HepG2 (cell line): ENCODE measurements at regions of chr19 and their contacts with region 1.

Region 1: DNA sequence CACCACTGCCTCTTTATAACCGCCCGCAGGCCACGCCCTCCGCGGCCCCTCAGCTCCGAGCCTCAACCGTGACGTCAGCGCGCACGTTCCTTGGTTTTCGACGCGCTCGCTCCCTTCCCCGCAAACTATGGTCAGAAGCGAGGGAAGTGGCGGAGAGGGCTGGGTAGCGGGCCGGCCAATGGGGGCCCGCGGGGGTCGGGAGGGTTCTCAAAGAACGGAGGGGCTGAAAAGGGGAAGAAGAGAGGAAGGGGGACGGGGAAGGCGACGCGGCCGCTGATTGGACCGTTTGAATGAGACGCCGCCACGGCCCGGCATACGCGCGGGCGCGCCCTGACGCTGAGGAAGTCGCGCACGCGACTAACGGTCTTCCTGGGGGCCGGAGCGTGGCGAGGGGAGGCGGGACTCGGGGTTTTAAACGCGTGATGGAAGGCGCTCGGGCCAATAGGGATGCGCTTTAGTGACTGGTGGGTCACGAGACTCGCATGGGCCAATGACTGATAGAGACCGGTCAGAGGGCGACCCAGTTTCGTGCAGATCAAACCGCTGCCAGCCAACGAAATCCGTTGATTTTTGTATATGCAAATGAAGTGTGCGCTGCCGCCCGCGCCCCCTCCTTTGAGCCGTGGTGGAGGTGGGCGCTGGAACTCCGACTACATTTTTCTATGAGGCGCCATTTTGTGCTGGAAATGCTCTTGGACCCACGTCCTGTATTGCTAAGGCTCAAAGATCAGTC is 378 bp upstream of the UBE2S start:
- DNase-seq: peak; percentile 83
- ATAC-seq: peak; percentile 86
- H3K4me3 ChIP-seq: peak overlapping the region; percentile 82 to 88 (median 83); a peak in 5 of 6 replicates
- H3K27ac ChIP-seq: peak overlapping the region; percentile 68
- H3K4me1 ChIP-seq: peaks cover 26% of the 10 kb centered on the region
- H3K27me3 ChIP-seq: peaks cover 0 to 5% of the 10 kb centered on the region in 2 experiments; a peak in 1 of 5 replicates
- CTCF ChIP-seq: no peak
- EP300 ChIP-seq: no peak
- POLR2A ChIP-seq: no peak
- RAD21 ChIP-seq: 0 out of 2 replicates have a peak, but pooled peaks have one; percentile 1

Region 2: GRCh38 chr19:54281007-54281728 is 1126.8 kb before region 1 on chr19 and contains the start of gene LILRB2:
- CTCF ChIA-PET with region 1: no interaction called
- POLR2A ChIA-PET with region 1: no interaction called
- in situ Hi-C with region 1: no loop called
- intact Hi-C with region 1: no loop called
- DNase-seq: no peak
- ATAC-seq: no peak
- H3K4me3 ChIP-seq: no peak within 1 kb of the TSS
- H3K27ac ChIP-seq: no peak within 1 kb of the TSS
- H3K4me1 ChIP-seq: no peaks in the 10 kb centered on the region
- H3K27me3 ChIP-seq: peaks cover 1 to 42% of the 10 kb centered on the region in 2 experiments
- CTCF ChIP-seq: no peak
- EP300 ChIP-seq: no peak
- POLR2A ChIP-seq: no peak
- RAD21 ChIP-seq: no peak
- total RNA-seq, gene LILRB2: not detected in 2 replicates

Region 3: GRCh38 chr19:55146078-55146704 is 261.8 kb before region 1 on chr19:
- CTCF ChIA-PET with region 1: no interaction called
- POLR2A ChIA-PET with region 1: interaction called, 3 read pairs
- in situ Hi-C with region 1: loop called (anchors 5 kb)
- intact Hi-C with region 1: no loop called
- DNase-seq: no peak
- ATAC-seq: peak; percentile 17; the same call in 2 of the 3 replicates
- H3K4me3 ChIP-seq: peak overlapping the region in 2 of 3 experiments; percentile 36 to 46; a peak in 3 of 6 replicates
- H3K27ac ChIP-seq: no peak overlapping the region
- H3K4me1 ChIP-seq: peaks cover 20% of the 10 kb centered on the region; the same call in 1 of the 2 replicates
- H3K27me3 ChIP-seq: peaks cover 0 to 23% of the 10 kb centered on the region in 2 experiments; a peak in 2 of 5 replicates
- CTCF ChIP-seq: peak; percentile 62
- EP300 ChIP-seq: no peak
- POLR2A ChIP-seq: no peak
- RAD21 ChIP-seq: no peak

Region 4: GRCh38 chr19:55216461-55217198 is 191.3 kb before region 1 on chr19:
- CTCF ChIA-PET with region 1: no interaction called
- POLR2A ChIA-PET with region 1: interaction called, 10 read pairs
- in situ Hi-C with region 1: no loop called
- intact Hi-C with region 1: no loop called
- DNase-seq: peak; percentile 96
- ATAC-seq: peak; percentile 87
- H3K4me3 ChIP-seq: peak overlapping the region; percentile 69 to 94 (median 89)
- H3K27ac ChIP-seq: peak overlapping the region; percentile 89
- H3K4me1 ChIP-seq: peaks cover 45% of the 10 kb centered on the region
- H3K27me3 ChIP-seq: no peaks in the 10 kb centered on the region
- CTCF ChIP-seq: peak; percentile 1; the same call in 1 of the 2 replicates
- EP300 ChIP-seq: peak in 1 of 2 experiments; percentile 65; a peak in 2 of 4 replicates
- POLR2A ChIP-seq: peak; percentile 50 to 61
- RAD21 ChIP-seq: peak; percentile 26; the same call in 1 of the 2 replicates

Region 5: DNA sequence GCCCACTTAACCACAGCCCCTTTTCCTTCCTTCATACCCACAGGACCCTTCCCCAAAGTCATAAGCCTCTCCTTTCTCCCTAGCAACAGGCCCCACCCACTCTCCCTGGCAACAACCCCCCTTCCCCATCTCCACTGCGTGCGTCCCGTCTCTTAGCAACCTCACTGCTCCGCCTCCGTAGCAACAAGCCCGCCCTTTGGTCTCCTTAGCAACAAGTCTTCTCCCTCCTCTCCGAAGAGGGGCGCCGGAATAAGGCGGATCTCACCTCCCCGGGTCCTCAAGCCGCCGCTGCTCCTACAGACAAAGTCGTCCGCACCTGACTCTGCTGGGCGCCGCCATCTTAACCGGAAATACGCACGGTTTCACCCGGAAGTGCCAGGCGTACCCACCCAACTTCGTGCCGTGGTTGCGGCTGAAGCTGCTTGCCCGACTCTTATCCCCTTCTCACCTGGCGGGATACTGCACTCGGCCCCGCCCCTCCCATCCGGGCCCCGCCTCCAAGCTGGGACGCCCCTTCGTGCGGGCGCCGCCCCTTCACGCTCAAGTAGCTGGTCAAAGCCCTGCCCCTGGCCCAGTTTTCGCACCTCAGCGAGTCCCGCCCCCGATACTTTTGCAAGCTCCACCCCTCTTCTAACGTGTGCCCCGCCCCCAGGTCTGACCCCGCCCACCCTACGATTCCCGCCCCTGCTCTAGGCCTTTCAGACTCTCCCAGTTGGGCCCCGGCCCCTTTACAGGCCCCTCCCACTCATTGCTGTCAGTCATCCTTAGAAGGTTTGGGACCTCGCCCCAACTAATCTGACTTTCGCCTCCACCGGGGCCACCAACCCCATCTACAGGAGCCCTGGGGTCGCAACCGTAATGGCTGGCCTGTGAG is 128.0 kb before region 1 on chr19 and contains the start of gene HSPBP1:
- CTCF ChIA-PET with region 1: no interaction called
- POLR2A ChIA-PET with region 1: interaction called, 20 read pairs
- in situ Hi-C with region 1: no loop called
- intact Hi-C with region 1: no loop called
- DNase-seq: peak; percentile 92
- ATAC-seq: peak; percentile 90
- H3K4me3 ChIP-seq: peak within 1 kb of the TSS; percentile 86 to 97 (median 93)
- H3K27ac ChIP-seq: peak within 1 kb of the TSS; percentile 68
- H3K4me1 ChIP-seq: peaks cover 24% of the 10 kb centered on the region
- H3K27me3 ChIP-seq: peaks cover 0 to 9% of the 10 kb centered on the region in 2 experiments; a peak in 3 of 5 replicates
- CTCF ChIP-seq: no peak
- EP300 ChIP-seq: no peak
- POLR2A ChIP-seq: peak; percentile 72 to 86
- RAD21 ChIP-seq: peak; percentile 10; the same call in 1 of the 2 replicates
- total RNA-seq, gene HSPBP1: 33.7 and 35.9 TPM in 2 replicates

Region 6: GRCh38 chr19:55333870-55334269 is 74.1 kb before region 1 on chr19:
- CTCF ChIA-PET with region 1: no interaction called
- POLR2A ChIA-PET with region 1: interaction called, 20 read pairs
- in situ Hi-C with region 1: no loop called
- intact Hi-C with region 1: no loop called
- DNase-seq: peak; percentile 91
- ATAC-seq: peak; percentile 73
- H3K4me3 ChIP-seq: peak overlapping the region; percentile 64 to 70 (median 66)
- H3K27ac ChIP-seq: peak overlapping the region; percentile 87
- H3K4me1 ChIP-seq: peaks cover 41% of the 10 kb centered on the region
- H3K27me3 ChIP-seq: no peaks in the 10 kb centered on the region
- CTCF ChIP-seq: no peak
- EP300 ChIP-seq: peak in 1 of 2 experiments; percentile 70; a peak in 2 of 4 replicates
- POLR2A ChIP-seq: peak; percentile 48 to 81; a peak in 3 of 4 replicates
- RAD21 ChIP-seq: no peak

Region 7: DNA sequence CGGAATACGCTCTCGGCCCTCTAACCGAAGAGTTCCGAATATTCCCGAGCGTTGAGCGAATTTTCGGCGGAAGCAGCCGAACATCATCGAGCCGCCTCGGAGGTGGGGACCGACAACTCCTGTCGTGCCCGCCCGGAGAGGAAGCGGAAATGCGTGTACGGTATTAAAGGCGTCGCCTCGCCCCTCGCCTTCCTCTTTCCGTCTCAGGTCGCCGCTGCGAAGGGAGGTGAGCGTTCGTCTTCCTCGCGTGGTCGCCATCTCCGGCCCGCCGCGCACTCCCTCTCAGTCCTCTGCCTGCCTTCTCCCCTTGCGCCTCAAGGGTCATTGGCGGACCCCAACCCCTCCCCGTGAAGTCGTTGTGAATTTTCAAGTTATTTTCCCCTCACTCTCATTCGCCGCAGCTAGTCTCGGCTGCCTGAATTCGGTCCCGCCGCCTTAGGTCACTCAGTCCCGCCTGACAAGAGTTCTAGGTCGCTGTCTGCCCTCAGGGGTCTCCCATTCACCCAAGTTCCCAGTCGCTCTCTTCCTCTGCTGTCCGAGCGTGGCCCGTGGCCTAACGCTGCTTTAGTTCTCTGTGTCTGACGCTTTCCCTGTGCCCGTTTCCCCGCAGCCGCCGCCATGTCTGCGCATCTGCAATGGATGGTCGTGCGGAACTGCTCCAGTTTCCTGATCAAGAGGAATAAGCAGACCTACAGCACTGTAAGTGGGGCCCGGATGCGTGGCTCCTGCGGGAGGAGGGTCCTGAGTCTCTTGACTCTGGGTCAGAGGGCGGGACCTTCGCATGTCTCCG is 22.0 kb before region 1 on chr19 and contains the start of gene RPL28:
- CTCF ChIA-PET with region 1: no interaction called
- POLR2A ChIA-PET with region 1: interaction called, 62 read pairs
- in situ Hi-C with region 1: no loop called
- intact Hi-C with region 1: no loop called
- DNase-seq: peak; percentile 96
- ATAC-seq: peak; percentile 77
- H3K4me3 ChIP-seq: peak within 1 kb of the TSS; percentile 86 to 100 (median 89)
- H3K27ac ChIP-seq: peak within 1 kb of the TSS; percentile 92
- H3K4me1 ChIP-seq: peaks cover 42% of the 10 kb centered on the region
- H3K27me3 ChIP-seq: no peaks in the 10 kb centered on the region; a peak in 1 of 5 replicates
- CTCF ChIP-seq: no peak; the same call in 1 of the 2 replicates
- EP300 ChIP-seq: no peak
- POLR2A ChIP-seq: peak; percentile 99 to 100
- RAD21 ChIP-seq: no peak
- total RNA-seq, gene RPL28: 105 and 149 TPM in 2 replicates

Region 8: GRCh38 chr19:55476100-55476775 is 68.3 kb after region 1 on chr19 and contains the start of gene ZNF628:
- CTCF ChIA-PET with region 1: no interaction called
- POLR2A ChIA-PET with region 1: interaction called, 14 read pairs
- in situ Hi-C with region 1: no loop called
- intact Hi-C with region 1: no loop called
- DNase-seq: peak; percentile 93
- ATAC-seq: peak; percentile 93
- H3K4me3 ChIP-seq: peak within 1 kb of the TSS; percentile 81 to 97 (median 86)
- H3K27ac ChIP-seq: peak within 1 kb of the TSS; percentile 77
- H3K4me1 ChIP-seq: peaks cover 53% of the 10 kb centered on the region
- H3K27me3 ChIP-seq: no peaks in the 10 kb centered on the region; a peak in 1 of 5 replicates
- CTCF ChIP-seq: no peak
- EP300 ChIP-seq: no peak
- POLR2A ChIP-seq: peak in 1 of 2 experiments; percentile 37; a peak in 1 of 4 replicates
- RAD21 ChIP-seq: no peak; the same call in 1 of the 2 replicates
- total RNA-seq, gene ZNF628: 1.00 and 1.2 TPM in 2 replicates